ENCODE measurements at regions of chr1 and their contacts with region 1.

Region 1: GRCh38 chr1:201709564-201710295 is 119.2 kb upstream of the IPO9 start:
- DNase-seq: peak; percentile 77
- H3K4me3 ChIP-seq: no peak overlapping the region
- H3K27ac ChIP-seq: peak overlapping the region in 2 of 4 donors; percentile 15 to 49
- H3K4me1 ChIP-seq: peaks cover 32 to 46% (median 38%) of the 10 kb centered on the region in 4 donors
- H3K27me3 ChIP-seq: no peaks in the 10 kb centered on the region
- CTCF ChIP-seq: peak; percentile 87 to 92 (median 91)
- EP300 ChIP-seq: no peak
- POLR2A ChIP-seq: no peak

Region 2: DNA sequence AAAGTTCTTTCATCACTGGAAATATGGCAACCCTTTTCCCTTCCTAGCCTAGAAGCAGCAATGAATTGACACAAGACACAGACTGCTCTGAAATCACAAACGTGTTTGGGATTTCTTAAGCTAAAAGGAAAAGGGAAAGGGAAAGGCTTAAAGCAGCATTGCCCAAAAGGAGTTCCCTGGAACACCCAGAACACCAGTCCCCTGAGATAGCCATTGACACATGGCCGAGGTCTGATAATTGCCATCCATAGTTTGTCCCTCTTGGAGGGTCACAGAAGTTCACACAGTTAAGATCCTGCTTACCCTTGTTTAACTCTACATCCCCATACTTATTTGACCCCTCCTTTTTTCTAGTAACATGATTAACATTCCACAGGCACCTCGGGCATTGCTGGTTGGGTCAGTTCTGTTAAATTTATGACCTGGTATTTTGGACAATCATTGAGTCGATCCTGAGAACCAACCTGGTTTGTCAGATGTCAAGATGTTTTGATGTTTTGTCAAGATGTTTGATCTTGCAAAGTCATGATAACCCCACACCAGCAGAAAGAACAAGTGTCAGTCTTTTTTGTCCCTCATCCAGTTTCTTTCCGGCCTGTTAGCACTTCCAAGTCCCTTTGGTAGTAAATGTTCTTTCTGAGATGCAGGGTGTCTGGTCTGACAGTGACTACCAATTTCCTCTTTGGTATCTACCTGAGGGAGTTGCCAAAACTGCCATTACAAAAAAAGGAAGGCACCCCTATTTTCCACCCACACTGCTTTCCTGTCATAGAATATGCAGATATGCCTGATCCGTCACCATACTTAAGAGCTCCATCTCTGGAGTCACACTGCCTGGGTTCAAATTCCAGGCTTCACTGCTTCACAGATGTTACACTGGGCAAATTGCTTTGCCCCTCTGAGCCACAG is 1372.6 kb before region 1 on chr1:
- in situ Hi-C with region 1: no loop called
- intact Hi-C with region 1: no loop called
- DNase-seq: no peak
- H3K4me3 ChIP-seq: no peak overlapping the region
- H3K27ac ChIP-seq: no peak overlapping the region
- H3K4me1 ChIP-seq: no peaks in the 10 kb centered on the region
- H3K27me3 ChIP-seq: no peaks in the 10 kb centered on the region
- CTCF ChIP-seq: no peak
- EP300 ChIP-seq: no peak
- POLR2A ChIP-seq: no peak

Region 3: GRCh38 chr1:201565024-201565730 is 144.6 kb before region 1 on chr1:
- in situ Hi-C with region 1: loop called in 2 of 4 experiments (anchors 5 kb)
- intact Hi-C with region 1: no loop called
- DNase-seq: no peak
- H3K4me3 ChIP-seq: no peak overlapping the region
- H3K27ac ChIP-seq: peak overlapping the region in 3 of 4 donors; percentile 18 to 47 (median 44)
- H3K4me1 ChIP-seq: peaks cover 0 to 17% (median 6%) of the 10 kb centered on the region in 4 donors
- H3K27me3 ChIP-seq: no peaks in the 10 kb centered on the region
- CTCF ChIP-seq: no peak
- EP300 ChIP-seq: no peak
- POLR2A ChIP-seq: no peak

Region 4: DNA sequence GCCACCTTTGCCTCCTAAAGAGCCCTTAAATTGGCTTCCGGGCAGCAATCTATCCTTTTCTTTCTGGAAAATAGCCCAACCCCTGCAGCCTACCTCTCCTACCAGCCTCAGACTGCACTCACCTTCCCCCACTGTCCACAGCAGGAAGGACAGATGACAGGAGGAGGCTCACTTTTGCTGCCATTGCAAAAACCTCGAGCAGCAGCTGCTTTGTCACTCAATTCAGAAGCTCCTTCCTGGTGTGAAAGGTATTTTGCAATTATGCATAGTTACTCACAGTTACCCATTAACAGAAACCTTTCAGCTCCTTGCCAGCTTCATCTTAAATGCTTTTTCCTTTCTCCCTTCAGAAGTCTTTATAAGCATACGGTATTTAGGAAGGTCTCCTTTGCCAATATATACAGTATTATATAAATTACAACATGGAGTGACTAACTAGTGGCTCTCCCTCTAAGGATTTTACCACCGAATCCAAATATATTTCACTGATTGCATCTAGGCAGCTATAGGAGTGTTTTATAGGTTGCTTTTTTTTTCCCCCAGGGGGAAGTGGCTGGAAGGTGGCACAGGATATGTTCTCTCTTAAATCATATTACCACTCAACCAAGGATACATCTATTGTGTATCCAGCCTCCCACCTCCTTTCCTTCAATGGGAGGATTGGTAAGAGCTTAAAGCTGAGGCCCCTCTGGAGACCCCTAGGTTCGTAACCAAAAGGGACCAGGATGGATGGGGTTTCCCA is 22.8 kb before region 1 on chr1:
- in situ Hi-C with region 1: no loop called
- intact Hi-C with region 1: no loop called
- DNase-seq: peak; percentile 51
- H3K4me3 ChIP-seq: no peak overlapping the region
- H3K27ac ChIP-seq: peak overlapping the region; percentile 58 to 73 (median 62)
- H3K4me1 ChIP-seq: peaks cover 0 to 19% (median 10%) of the 10 kb centered on the region in 4 donors
- H3K27me3 ChIP-seq: no peaks in the 10 kb centered on the region
- CTCF ChIP-seq: no peak
- EP300 ChIP-seq: no peak
- POLR2A ChIP-seq: no peak

Region 5: GRCh38 chr1:201783572-201783971 is 73.8 kb after region 1 on chr1:
- in situ Hi-C with region 1: loop called in 3 of 4 experiments (anchors 5 to 10 kb)
- intact Hi-C with region 1: no loop called
- DNase-seq: no peak
- H3K4me3 ChIP-seq: no peak overlapping the region
- H3K27ac ChIP-seq: no peak overlapping the region
- H3K4me1 ChIP-seq: peaks cover 0 to 9% (median 3%) of the 10 kb centered on the region in 4 donors
- H3K27me3 ChIP-seq: no peaks in the 10 kb centered on the region
- CTCF ChIP-seq: no peak
- EP300 ChIP-seq: no peak
- POLR2A ChIP-seq: no peak

Region 6: GRCh38 chr1:201792534-201793305 is 83.0 kb after region 1 on chr1:
- in situ Hi-C with region 1: loop called (anchors 5 to 10 kb)
- intact Hi-C with region 1: loop called (anchors 2 kb)
- DNase-seq: peak; percentile 78
- H3K4me3 ChIP-seq: no peak overlapping the region
- H3K27ac ChIP-seq: peak overlapping the region; percentile 57 to 81 (median 74)
- H3K4me1 ChIP-seq: peaks cover 13 to 33% (median 19%) of the 10 kb centered on the region in 4 donors
- H3K27me3 ChIP-seq: no peaks in the 10 kb centered on the region
- CTCF ChIP-seq: peak; percentile 93 to 98 (median 96)
- EP300 ChIP-seq: no peak
- POLR2A ChIP-seq: no peak